ENCODE measurements at regions of chr2 and their contacts with region 1.

Region 1: GRCh38 chr2:222878877-222879603 is 18.2 kb downstream of the ACSL3 start:
- DNase-seq: peak in 1 of 2 experiments; percentile 46
- H3K4me3 ChIP-seq: no peak overlapping the region
- H3K4me3 Mint-ChIP-seq: no peak overlapping the region
- H3K27ac Mint-ChIP-seq: peak overlapping the region; percentile 3
- H3K4me1 ChIP-seq: peaks cover 41% of the 10 kb centered on the region
- H3K4me1 Mint-ChIP-seq: peaks cover 30% of the 10 kb centered on the region
- H3K27me3 ChIP-seq: no peaks in the 10 kb centered on the region
- H3K27me3 Mint-ChIP-seq: no peaks in the 10 kb centered on the region
- CTCF ChIP-seq: no peak

Region 2: GRCh38 chr2:222903234-222904220 is 24.5 kb after region 1 on chr2:
- CTCF ChIA-PET with region 1: no interaction called
- POLR2A ChIA-PET with region 1: interaction called, 3 read pairs
- intact Hi-C with region 1: loop called (anchors 1 kb)
- DNase-seq: peak; percentile 67 to 75
- H3K4me3 ChIP-seq: no peak overlapping the region
- H3K4me3 Mint-ChIP-seq: no peak overlapping the region
- H3K27ac Mint-ChIP-seq: no peak overlapping the region
- H3K4me1 ChIP-seq: peaks cover 44% of the 10 kb centered on the region
- H3K4me1 Mint-ChIP-seq: peaks cover 72% of the 10 kb centered on the region
- H3K27me3 ChIP-seq: no peaks in the 10 kb centered on the region
- H3K27me3 Mint-ChIP-seq: no peaks in the 10 kb centered on the region
- CTCF ChIP-seq: peak; percentile 86 to 87

Measured in Caco-2 (cell line).